ENCODE measurements at regions of chr9 and their contacts with region 1.

Region 1: GRCh38 chr9:122810306-122810946 is 10.5 kb downstream of the OR1K1 start:
- DNase-seq: peak; percentile 61
- ATAC-seq: peak; percentile 96
- H3K4me3 ChIP-seq: no peak overlapping the region
- H3K27ac ChIP-seq: no peak overlapping the region
- H3K4me1 ChIP-seq: peaks cover 1 to 6% of the 10 kb centered on the region in 2 experiments; a peak in 3 of 4 replicates
- H3K27me3 ChIP-seq: no peaks in the 10 kb centered on the region
- CTCF ChIP-seq: peak; percentile 54 to 89 (median 85)
- POLR2A ChIP-seq: no peak
- RAD21 ChIP-seq: peak; percentile 97

Region 2: GRCh38 chr9:122464633-122465567 is 345.5 kb before region 1 on chr9:
- CTCF ChIA-PET with region 1: interaction called, 23 read pairs
- POLR2A ChIA-PET with region 1: no interaction called
- RAD21 ChIA-PET with region 1: no interaction called
- intact Hi-C with region 1: loop called (anchors 1 kb)
- DNase-seq: peak; percentile 68
- ATAC-seq: peak; percentile 89
- H3K4me3 ChIP-seq: peak overlapping the region; percentile 35 to 50
- H3K27ac ChIP-seq: no peak overlapping the region
- H3K4me1 ChIP-seq: peaks cover 0 to 12% of the 10 kb centered on the region in 2 experiments; a peak in 2 of 4 replicates
- H3K27me3 ChIP-seq: peaks cover 17% of the 10 kb centered on the region
- CTCF ChIP-seq: peak; percentile 79 to 88 (median 86)
- POLR2A ChIP-seq: no peak
- RAD21 ChIP-seq: peak; percentile 93

Measured in HCT116 (cell line).